Dorsolateral prefrontal cortex (tissue), 120 donors: ENCODE measurements at regions of chr19 and their contacts with region 1.

Region 1: DNA sequence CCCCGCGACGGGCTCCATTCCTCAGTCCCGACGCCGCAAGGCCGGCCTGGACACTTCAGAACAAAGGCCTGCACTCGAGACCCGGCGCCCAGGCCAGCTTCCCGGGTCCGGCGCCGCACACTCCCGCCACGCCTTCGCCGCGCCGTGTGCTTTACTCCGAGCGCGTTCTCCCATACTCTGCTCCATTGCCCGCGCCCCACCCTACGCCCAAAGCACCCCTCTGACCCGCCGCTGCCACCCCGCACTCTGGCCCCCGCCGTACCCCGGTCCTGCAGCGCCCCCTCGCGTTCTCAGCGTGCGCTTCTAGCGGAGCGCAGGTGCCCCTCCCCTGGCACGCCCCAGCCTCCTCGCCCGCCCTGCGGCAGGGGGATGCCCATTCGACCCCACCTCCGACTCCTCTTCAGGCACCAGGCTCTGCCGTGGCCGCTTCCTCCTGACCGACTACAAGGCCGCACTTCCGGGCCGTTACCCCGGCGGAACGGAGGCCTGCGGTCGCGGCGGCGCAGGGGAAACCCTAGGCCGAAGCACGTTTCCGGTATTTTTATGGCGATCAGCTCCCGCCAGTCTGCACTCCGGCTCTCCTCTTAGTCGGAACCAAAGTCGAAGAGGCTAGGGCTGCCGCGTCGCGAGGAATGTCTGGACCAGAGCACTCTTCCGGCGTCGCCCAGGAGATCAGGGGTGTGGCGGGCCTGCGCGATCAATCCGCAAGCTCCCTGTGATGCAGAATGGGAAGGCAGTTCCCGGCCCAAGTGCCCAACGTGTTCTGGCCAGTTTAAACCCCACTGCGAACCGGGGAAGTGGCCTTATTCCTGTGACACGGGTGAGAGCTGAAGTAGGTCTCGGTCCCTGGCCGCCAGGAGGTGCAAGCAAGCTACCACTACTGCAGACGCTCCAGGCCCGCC is at the start of gene ZBTB45:
- DNase-seq: peak; percentile 81 to 94 (median 93)
- H3K4me3 ChIP-seq: peak within 1 kb of the TSS; percentile 62 to 98 (median 89)
- H3K27ac ChIP-seq: peak within 1 kb of the TSS; percentile 76 to 98 (median 94)
- H3K27me3 ChIP-seq: no peaks in the 10 kb centered on the region
- CTCF ChIP-seq: peak; percentile 45 to 85 (median 69)
- total RNA-seq, gene ZBTB45: 13.0 to 30.6 (median 19.7) TPM

Region 2: DNA sequence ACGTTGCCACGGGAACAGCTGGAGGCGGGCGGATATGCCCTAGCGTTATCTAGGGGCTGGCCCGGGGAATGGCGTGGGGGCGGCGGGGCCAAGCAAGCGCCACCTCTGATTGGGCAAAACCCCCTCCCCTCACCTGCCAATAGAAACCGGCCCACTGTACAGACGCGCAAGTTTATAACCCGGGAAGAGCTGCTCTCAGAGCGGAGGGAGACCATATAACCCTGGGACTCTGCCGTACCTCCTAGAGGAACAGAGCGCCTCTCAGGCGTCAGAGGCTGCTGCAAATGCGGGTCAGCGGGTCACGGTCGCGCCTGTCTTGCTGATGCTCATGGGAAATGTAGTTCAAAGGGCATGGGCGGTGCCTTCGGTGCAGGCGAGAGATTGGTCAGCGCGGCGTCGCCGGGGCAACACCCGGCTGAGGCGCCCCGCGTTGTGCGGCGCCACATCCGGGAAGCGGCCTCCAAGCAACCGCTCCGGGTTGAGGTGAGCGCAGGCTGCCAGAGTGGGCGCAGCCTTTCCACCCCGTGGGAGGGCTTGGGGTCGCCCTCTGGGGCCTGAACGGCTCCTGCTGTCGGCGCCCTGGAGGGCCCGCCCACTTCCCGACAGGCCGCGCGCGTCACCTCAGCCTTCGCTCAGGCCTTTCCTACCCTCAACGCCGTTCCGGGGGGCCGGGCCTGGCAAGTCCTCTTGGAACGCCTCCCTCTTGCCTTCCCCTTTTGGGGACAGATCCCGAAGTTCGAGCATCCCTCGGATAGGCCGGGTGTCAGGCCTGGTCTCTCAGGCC is 43.7 kb before region 1 on chr19 and contains the start of gene ZNF446:
- intact Hi-C with region 1: loop called in 1 of 2 experiments (anchors 2 kb)
- DNase-seq: peak; percentile 94 to 99 (median 98)
- H3K4me3 ChIP-seq: peak within 1 kb of the TSS; percentile 63 to 97 (median 78)
- H3K27ac ChIP-seq: peak within 1 kb of the TSS; percentile 57 to 98 (median 91)
- H3K27me3 ChIP-seq: no peaks in the 10 kb centered on the region
- CTCF ChIP-seq: peak in 27 of 56 donors; percentile 2 to 49 (median 22)
- total RNA-seq, gene ZNF446: 9.0 to 21.1 (median 14.3) TPM

Region 3: DNA sequence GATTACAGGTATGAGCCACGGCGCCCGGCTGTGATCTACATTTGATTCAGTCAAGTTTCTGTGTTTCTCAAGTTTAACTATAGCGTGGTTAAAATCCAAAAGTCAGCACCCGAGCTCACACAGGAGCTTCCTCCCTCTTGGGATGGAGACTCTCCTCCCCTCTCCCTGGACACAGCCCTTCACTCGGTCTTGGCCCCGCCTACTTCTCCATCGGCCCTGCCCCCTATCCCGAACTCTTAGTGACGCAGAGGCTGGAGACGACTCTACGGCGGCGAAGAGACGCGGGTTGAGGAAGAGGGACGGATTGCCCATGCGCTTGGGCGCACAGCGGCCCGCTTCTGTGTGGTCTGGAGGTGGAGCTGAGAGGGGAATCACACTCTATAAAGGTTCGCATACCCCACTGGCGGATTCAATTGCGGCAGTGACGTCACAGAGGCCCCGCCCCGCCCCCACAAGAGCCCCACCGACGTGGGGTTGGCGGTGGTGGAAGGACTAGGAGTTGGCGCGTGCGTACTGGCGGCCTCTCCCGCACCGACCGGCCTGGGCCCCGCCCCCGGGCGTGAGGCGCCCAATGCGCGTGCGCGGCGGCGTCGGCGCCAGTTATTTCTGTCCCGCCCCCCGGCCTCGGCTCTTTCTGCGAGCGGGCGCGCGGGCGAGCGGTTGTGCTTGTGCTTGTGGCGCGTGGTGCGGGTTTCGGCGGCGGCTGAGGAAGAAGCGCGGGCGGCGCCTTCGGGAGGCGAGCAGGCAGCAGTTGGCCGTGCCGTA is 24.4 kb after region 1 on chr19 and contains the start of gene TRIM28:
- intact Hi-C with region 1: loop called in 1 of 2 experiments (anchors 2 kb)
- DNase-seq: peak; percentile 95 to 99 (median 98)
- H3K4me3 ChIP-seq: peak within 1 kb of the TSS; percentile 64 to 97 (median 84)
- H3K27ac ChIP-seq: peak within 1 kb of the TSS; percentile 79 to 100 (median 97)
- H3K27me3 ChIP-seq: peaks cover 0 to 5% (median 0%) of the 10 kb centered on the region in 45 donors
- CTCF ChIP-seq: peak in 16 of 56 donors; percentile 5 to 40 (median 20)
- total RNA-seq, gene TRIM28: 130 to 228 (median 176) TPM